ENCODE measurements at regions of chr1 and their contacts with region 1.

Region 1: DNA sequence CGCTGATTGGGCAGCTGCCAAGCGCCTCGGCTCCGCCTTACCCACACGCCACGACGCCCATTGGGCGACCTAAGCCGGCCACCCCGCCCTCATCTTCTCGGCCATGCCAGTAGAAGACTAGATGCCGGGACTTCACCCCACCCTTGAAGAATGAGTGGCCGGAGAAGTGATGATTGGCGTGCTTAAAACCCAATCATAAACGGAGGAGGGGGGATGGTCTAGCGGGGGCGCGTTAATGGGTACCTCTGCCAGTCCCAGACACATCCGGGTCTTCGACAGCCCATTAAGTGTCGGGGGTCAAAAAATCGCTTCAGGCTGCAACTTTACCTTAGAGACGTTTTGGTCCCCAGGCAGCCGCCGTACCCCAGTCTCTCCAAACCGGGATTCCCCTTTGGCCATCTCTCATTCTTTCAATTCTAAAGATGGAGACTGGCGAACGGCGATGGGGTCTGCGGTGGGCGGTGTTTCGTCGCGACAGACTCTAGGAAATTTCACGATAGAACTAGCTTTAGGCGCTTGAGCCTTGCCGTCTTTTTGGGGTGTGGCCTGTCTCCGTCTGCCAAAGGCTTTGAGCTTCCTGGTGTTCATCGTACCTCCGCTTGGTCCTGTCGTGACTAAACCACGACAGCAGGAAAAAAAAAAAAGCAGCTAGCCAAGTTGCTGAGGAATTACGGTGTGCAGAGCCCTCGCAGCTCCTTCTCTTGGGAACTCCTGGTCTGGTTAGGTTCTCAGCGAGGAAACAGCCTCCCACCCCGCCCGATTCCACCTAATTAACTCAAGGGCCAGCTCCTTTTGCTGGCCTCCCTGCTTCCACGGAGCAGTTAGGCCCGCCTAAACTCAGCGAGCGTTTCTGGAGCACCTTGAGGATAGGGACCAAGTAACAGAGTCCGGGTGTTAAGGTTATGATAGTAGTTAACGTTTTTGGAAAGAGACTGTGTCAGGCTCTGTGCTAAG is at the start of gene GATAD2B:
- DNase-seq: peak; percentile 90
- ATAC-seq: peak; percentile 92
- H3K4me3 Mint-ChIP-seq: peak within 1 kb of the TSS; percentile 95
- H3K27ac Mint-ChIP-seq: peak within 1 kb of the TSS; percentile 95
- H3K4me1 Mint-ChIP-seq: peaks cover 47% of the 10 kb centered on the region
- H3K27me3 Mint-ChIP-seq: no peaks in the 10 kb centered on the region
- CTCF ChIP-seq: no peak
- total RNA-seq, gene GATAD2B: 78.4 and 86.3 TPM in 2 replicates

Region 2: DNA sequence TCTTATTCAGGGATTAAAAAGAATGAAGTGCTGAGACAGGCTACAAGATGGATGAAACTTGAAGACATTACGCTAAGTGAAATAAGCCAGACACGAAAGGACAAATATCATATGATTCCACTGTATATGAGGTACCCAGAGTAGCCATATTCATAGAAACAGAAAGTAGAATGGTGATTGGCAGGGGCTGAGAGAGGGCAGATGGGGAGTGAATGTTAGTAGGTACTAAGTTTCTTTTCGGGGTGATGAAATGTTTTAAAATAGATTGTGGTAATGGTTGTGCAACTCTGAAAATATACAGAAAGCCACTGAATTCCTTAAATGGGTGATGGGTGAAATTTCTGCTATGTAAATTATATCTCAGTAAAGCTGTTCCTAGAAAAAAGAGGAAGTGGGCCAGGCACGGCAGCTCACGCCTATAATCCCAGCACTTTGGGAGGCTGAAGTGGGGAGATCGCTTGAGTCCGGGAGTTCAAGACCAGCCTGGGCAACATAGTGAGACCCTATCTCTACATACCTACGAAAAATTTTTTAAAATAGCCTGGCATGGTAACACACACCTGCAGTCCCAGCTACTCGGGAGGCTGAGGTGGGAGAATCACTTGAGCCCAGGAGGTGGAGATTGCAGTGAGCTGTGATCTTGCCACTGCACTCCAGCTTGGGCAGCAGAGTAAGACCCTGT is 132.1 kb before region 1 on chr1:
- CTCF ChIA-PET with region 1: interaction called, 3 read pairs
- POLR2A ChIA-PET with region 1: interaction called, 5 read pairs
- intact Hi-C with region 1: loop called (anchors 2 kb)
- DNase-seq: no peak
- ATAC-seq: peak; percentile 92
- H3K4me3 Mint-ChIP-seq: peak overlapping the region; percentile 71
- H3K27ac Mint-ChIP-seq: peak overlapping the region; percentile 96
- H3K4me1 Mint-ChIP-seq: peaks cover 45% of the 10 kb centered on the region
- H3K27me3 Mint-ChIP-seq: no peaks in the 10 kb centered on the region
- CTCF ChIP-seq: no peak

Region 3: GRCh38 chr1:153827168-153827964 is 95.9 kb before region 1 on chr1:
- CTCF ChIA-PET with region 1: interaction called, 3 read pairs
- POLR2A ChIA-PET with region 1: interaction called, 12 read pairs
- intact Hi-C with region 1: no loop called
- DNase-seq: no peak
- ATAC-seq: no peak
- H3K4me3 Mint-ChIP-seq: no peak overlapping the region
- H3K27ac Mint-ChIP-seq: no peak overlapping the region
- H3K4me1 Mint-ChIP-seq: peaks cover 11% of the 10 kb centered on the region
- H3K27me3 Mint-ChIP-seq: no peaks in the 10 kb centered on the region
- CTCF ChIP-seq: no peak

Region 4: DNA sequence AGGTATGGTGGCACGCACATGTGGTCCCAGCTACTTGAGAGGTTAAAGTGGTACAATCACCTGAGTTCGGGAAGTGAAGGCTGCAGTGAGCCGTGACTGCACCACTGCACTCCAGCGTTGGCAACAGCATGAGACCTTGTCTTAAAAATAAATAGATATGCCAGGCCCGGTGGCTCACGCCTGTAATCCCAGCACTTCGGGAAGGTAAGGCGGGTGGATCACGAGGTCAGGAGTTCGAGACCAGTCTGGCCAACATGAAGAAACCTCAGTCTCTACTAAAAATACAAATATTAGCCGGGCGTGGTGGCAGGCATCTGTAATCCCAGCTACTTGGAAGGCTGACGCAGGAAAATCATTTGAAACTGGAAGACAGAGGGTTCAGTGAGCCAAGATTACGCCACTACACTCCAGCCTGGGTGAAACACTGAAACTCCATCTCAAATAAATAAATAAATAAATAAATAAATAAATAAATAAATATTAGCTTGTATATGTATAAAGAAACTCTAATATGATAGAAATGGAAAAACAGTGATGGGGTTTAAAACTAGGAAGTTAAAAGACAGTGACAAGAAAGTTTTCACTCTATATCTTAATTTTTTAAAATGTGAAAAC is 19.3 kb before region 1 on chr1:
- CTCF ChIA-PET with region 1: no interaction called
- POLR2A ChIA-PET with region 1: no interaction called
- intact Hi-C with region 1: loop called (anchors 2 kb)
- DNase-seq: no peak
- ATAC-seq: no peak
- H3K4me3 Mint-ChIP-seq: no peak overlapping the region
- H3K27ac Mint-ChIP-seq: peak overlapping the region; percentile 12
- H3K4me1 Mint-ChIP-seq: peaks cover 41% of the 10 kb centered on the region
- H3K27me3 Mint-ChIP-seq: no peaks in the 10 kb centered on the region
- CTCF ChIP-seq: no peak

Region 5: GRCh38 chr1:153977250-153978240 is 54.3 kb after region 1 on chr1 and contains the start of gene JTB:
- CTCF ChIA-PET with region 1: no interaction called
- POLR2A ChIA-PET with region 1: interaction called, 50 read pairs
- intact Hi-C with region 1: loop called (anchors 2 kb)
- DNase-seq: peak; percentile 72
- ATAC-seq: peak; percentile 97
- H3K4me3 Mint-ChIP-seq: peak within 1 kb of the TSS; percentile 98
- H3K27ac Mint-ChIP-seq: peak within 1 kb of the TSS; percentile 97
- H3K4me1 Mint-ChIP-seq: peaks cover 32% of the 10 kb centered on the region
- H3K27me3 Mint-ChIP-seq: no peaks in the 10 kb centered on the region
- CTCF ChIP-seq: no peak
- total RNA-seq, gene JTB: 137 and 147 TPM in 2 replicates

Region 6: GRCh38 chr1:154272217-154272998 is 349.2 kb after region 1 on chr1 and contains the start of gene HAX1:
- CTCF ChIA-PET with region 1: no interaction called
- POLR2A ChIA-PET with region 1: no interaction called
- intact Hi-C with region 1: loop called (anchors 2 kb)
- DNase-seq: peak; percentile 88
- ATAC-seq: peak; percentile 93
- H3K4me3 Mint-ChIP-seq: peak within 1 kb of the TSS; percentile 96
- H3K27ac Mint-ChIP-seq: peak within 1 kb of the TSS; percentile 97
- H3K4me1 Mint-ChIP-seq: peaks cover 39% of the 10 kb centered on the region
- H3K27me3 Mint-ChIP-seq: no peaks in the 10 kb centered on the region
- CTCF ChIP-seq: peak; percentile 46
- total RNA-seq, gene HAX1: 89.4 and 93.0 TPM in 2 replicates